ENCODE measurements at regions of chr15 and their contacts with region 1.

Region 1: DNA sequence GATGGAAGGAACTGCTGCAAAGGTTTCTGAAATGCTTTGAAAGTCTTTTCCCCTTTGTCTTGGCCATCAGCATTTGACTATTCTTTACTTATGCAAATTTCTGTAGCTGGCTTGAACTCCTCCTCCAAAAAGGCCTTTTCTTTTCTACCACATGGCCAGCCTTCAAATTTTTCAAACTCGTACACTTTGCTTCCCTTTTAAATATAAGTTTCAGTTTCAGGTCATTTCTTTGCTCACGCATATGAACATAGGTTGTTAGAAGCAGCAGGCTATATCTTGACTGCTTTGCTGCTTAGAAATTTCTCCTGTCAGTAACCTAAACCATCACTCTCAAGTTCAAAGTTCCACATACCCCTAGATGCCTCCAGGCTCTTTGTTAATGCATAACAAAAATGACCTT is 62.4 kb downstream of the GALK2 start:
- DNase-seq: no peak
- H3K4me3 ChIP-seq: no peak overlapping the region
- H3K27ac ChIP-seq: no peak overlapping the region
- H3K4me1 ChIP-seq: peaks cover 0 to 7% of the 10 kb centered on the region in 2 donors
- H3K27me3 ChIP-seq: no peaks in the 10 kb centered on the region
- CTCF ChIP-seq: no peak
- POLR2A ChIP-seq: no peak

Region 2: GRCh38 chr15:50145451-50145872 is 913.1 kb after region 1 on chr15:
- intact Hi-C with region 1: loop called (anchors 5 kb)
- DNase-seq: peak; percentile 31 to 65
- H3K4me3 ChIP-seq: no peak overlapping the region
- H3K27ac ChIP-seq: peak overlapping the region; percentile 26 to 31
- H3K4me1 ChIP-seq: peaks cover 0 to 4% of the 10 kb centered on the region in 2 donors
- H3K27me3 ChIP-seq: no peaks in the 10 kb centered on the region
- CTCF ChIP-seq: peak; percentile 49 to 77 (median 68)
- POLR2A ChIP-seq: no peak

Measured in uterus (tissue), 4 donors.